ENCODE measurements at regions of chr11 and their contacts with region 1.

Region 1: GRCh38 chr11:77473801-77474683 is at the start of gene PAK1:
- DNase-seq: peak; percentile 88
- H3K4me3 ChIP-seq: peak within 1 kb of the TSS; percentile 71 to 85 (median 80)
- H3K27ac ChIP-seq: peak within 1 kb of the TSS; percentile 11
- H3K4me1 ChIP-seq: peaks cover 20% of the 10 kb centered on the region
- H3K27me3 ChIP-seq: no peaks in the 10 kb centered on the region
- CTCF ChIP-seq: peak in 1 of 2 donors; percentile 46
- total RNA-seq, gene PAK1: 60.5 to 87.6 TPM

Region 2: DNA sequence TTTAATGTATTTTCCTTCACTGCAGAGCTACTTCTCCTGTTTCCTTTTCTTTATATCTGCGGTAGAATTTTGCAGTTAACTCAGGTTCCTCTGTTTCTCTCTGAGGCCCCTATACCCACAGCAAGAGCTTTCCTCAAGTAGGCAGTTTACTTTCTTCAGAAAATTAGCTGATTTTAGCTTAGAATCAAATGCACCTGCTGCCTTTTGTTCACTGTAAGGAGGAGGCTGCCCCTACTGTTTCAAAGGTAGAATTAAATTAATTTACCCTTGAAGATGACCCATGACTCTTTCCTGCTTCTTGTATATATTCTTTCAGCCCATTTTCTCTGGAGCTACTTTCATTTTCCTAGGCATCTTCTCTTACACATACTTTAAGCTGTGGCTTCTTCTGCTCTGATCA is 103.8 kb before region 1 on chr11:
- CTCF ChIA-PET with region 1: no interaction called
- dilution Hi-C with region 1: no loop called
- in situ Hi-C with region 1: no loop called
- intact Hi-C with region 1: loop called (anchors 5 kb)
- DNase-seq: no peak
- H3K4me3 ChIP-seq: no peak overlapping the region
- H3K27ac ChIP-seq: no peak overlapping the region
- H3K4me1 ChIP-seq: peaks cover 16% of the 10 kb centered on the region
- H3K27me3 ChIP-seq: no peaks in the 10 kb centered on the region
- CTCF ChIP-seq: no peak

Region 3: GRCh38 chr11:77506857-77507256 is 32.8 kb after region 1 on chr11:
- CTCF ChIA-PET with region 1: interaction called, 4 read pairs
- dilution Hi-C with region 1: no loop called
- in situ Hi-C with region 1: no loop called
- intact Hi-C with region 1: loop called (anchors 2 kb)
- DNase-seq: peak; percentile 91
- H3K4me3 ChIP-seq: peak overlapping the region in 1 of 3 experiments; percentile 21
- H3K27ac ChIP-seq: no peak overlapping the region
- H3K4me1 ChIP-seq: peaks cover 40% of the 10 kb centered on the region
- H3K27me3 ChIP-seq: no peaks in the 10 kb centered on the region
- CTCF ChIP-seq: no peak

Region 4: GRCh38 chr11:77547863-77548551 is 74.0 kb after region 1 on chr11:
- CTCF ChIA-PET with region 1: interaction called, 3 read pairs
- dilution Hi-C with region 1: no loop called
- in situ Hi-C with region 1: no loop called
- intact Hi-C with region 1: loop called (anchors 1 kb)
- DNase-seq: peak; percentile 47
- H3K4me3 ChIP-seq: no peak overlapping the region
- H3K27ac ChIP-seq: no peak overlapping the region
- H3K4me1 ChIP-seq: no peaks in the 10 kb centered on the region
- H3K27me3 ChIP-seq: no peaks in the 10 kb centered on the region
- CTCF ChIP-seq: peak; percentile 47 to 69

Region 5: DNA sequence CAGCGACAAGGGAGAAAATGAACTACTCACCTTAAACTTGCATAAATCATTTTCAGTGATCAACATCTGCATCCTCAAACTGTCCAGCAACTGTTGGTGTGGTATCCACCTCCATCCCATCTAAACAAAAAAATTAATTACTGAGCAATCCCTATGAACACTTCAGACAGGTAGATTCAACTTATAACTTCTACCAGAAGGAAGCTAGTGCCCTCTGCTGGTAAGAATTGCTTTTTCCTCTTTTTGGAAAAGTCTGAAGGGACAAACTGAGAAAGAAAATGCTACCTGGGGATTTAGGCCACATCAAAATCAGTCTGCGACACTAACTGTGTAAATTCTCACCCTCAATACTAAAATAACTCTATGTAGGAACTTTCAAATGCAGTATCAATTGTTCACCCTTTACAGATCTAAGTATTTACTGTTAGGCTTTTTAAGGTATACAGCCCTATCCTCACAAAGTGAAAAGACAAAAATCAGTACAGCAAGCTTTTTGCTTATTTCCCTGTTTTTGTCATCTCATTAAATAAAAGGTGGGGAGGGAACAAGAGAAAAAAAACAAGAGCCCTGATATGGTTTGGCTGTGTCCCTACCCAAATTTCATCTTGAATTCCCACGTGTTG is 145.6 kb after region 1 on chr11:
- CTCF ChIA-PET with region 1: no interaction called
- dilution Hi-C with region 1: no loop called
- in situ Hi-C with region 1: no loop called
- intact Hi-C with region 1: loop called (anchors 1 kb)
- DNase-seq: peak; percentile 50
- H3K4me3 ChIP-seq: no peak overlapping the region
- H3K27ac ChIP-seq: no peak overlapping the region
- H3K4me1 ChIP-seq: no peaks in the 10 kb centered on the region
- H3K27me3 ChIP-seq: no peaks in the 10 kb centered on the region
- CTCF ChIP-seq: peak; percentile 72 to 76

Measured in mammary epithelial cell (primary cell).